ENCODE measurements at regions of chr3 and their contacts with region 1.

Region 1: GRCh38 chr3:126475413-126476114 is at the start of gene ZXDC:
- DNase-seq: peak; percentile 80 to 97 (median 91)
- H3K4me3 ChIP-seq: peak within 1 kb of the TSS; percentile 65 to 94 (median 81)
- H3K27ac ChIP-seq: peak within 1 kb of the TSS; percentile 23 to 95 (median 85)
- H3K27me3 ChIP-seq: no peaks in the 10 kb centered on the region
- CTCF ChIP-seq: peak in 35 of 56 donors; percentile 14 to 56 (median 30)
- total RNA-seq, gene ZXDC: 28.6 to 58.7 (median 41.4) TPM

Region 2: GRCh38 chr3:125916376-125916978 is 559.1 kb before region 1 on chr3:
- intact Hi-C with region 1: loop called (anchors 5 to 10 kb)
- DNase-seq: peak; percentile 92 to 97 (median 96)
- H3K4me3 ChIP-seq: peak overlapping the region; percentile 24 to 93 (median 77)
- H3K27ac ChIP-seq: peak overlapping the region in 52 of 59 donors; percentile 8 to 92 (median 75)
- H3K27me3 ChIP-seq: no peaks in the 10 kb centered on the region
- CTCF ChIP-seq: peak in 39 of 56 donors; percentile 20 to 69 (median 45)

Region 3: GRCh38 chr3:126259411-126260391 is 215.9 kb before region 1 on chr3:
- intact Hi-C with region 1: loop called (anchors 5 kb)
- DNase-seq: peak; percentile 18 to 84 (median 70)
- H3K4me3 ChIP-seq: peak overlapping the region in 5 of 59 donors; percentile 1 to 31 (median 21)
- H3K27ac ChIP-seq: peak overlapping the region in 3 of 59 donors; percentile 0 to 44 (median 15)
- H3K27me3 ChIP-seq: no peaks in the 10 kb centered on the region
- CTCF ChIP-seq: peak; percentile 43 to 96 (median 82)

Region 4: GRCh38 chr3:126357295-126358037 is 118.1 kb before region 1 on chr3 and contains the start of gene KLF15:
- intact Hi-C with region 1: loop called (anchors 2 to 5 kb)
- DNase-seq: peak; percentile 82 to 96 (median 90)
- H3K4me3 ChIP-seq: peak within 1 kb of the TSS; percentile 61 to 95 (median 82)
- H3K27ac ChIP-seq: peak within 1 kb of the TSS; percentile 90 to 100 (median 98)
- H3K27me3 ChIP-seq: no peaks in the 10 kb centered on the region
- CTCF ChIP-seq: peak in 1 of 56 donors; percentile 14
- total RNA-seq, gene KLF15: 11.7 to 112 (median 39.5) TPM

Region 5: DNA sequence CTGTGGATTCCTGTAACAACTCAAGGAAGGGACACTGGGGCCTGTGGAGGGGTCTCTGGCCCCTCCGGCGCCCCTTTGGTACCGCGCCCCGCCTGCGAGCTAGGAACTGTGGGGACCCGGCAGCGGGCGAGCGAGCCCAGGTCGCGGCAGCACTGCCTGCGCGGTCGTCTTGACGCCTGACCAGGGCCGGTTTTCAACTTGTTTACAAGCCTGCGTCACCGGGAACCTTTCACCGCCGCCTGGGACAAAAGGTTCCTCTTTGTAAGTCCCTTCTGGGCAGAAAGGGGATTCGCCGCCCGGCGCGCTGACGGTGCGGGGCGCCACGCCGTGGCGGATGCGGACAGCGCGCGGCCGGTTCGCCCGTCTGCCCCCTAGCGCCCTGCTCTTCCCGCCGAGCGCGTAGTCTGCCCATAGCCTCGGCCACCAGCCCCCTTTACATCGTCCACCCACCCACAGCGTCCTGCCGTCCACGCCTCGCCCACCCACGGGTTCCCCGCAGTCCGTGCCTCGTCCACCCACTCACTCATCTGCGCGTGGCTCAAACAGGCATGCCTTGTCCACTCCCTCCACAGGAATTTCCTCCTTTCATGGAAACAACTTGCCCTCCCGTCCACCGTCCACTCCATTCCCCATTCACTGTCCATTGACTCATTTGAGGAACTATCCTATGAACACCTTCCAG is 86.3 kb before region 1 on chr3:
- intact Hi-C with region 1: loop called (anchors 1 to 10 kb)
- DNase-seq: peak; percentile 76 to 92 (median 90)
- H3K4me3 ChIP-seq: peak overlapping the region; percentile 41 to 85 (median 64)
- H3K27ac ChIP-seq: peak overlapping the region; percentile 63 to 95 (median 88)
- H3K27me3 ChIP-seq: no peaks in the 10 kb centered on the region
- CTCF ChIP-seq: peak; percentile 58 to 100 (median 99)

Region 6: DNA sequence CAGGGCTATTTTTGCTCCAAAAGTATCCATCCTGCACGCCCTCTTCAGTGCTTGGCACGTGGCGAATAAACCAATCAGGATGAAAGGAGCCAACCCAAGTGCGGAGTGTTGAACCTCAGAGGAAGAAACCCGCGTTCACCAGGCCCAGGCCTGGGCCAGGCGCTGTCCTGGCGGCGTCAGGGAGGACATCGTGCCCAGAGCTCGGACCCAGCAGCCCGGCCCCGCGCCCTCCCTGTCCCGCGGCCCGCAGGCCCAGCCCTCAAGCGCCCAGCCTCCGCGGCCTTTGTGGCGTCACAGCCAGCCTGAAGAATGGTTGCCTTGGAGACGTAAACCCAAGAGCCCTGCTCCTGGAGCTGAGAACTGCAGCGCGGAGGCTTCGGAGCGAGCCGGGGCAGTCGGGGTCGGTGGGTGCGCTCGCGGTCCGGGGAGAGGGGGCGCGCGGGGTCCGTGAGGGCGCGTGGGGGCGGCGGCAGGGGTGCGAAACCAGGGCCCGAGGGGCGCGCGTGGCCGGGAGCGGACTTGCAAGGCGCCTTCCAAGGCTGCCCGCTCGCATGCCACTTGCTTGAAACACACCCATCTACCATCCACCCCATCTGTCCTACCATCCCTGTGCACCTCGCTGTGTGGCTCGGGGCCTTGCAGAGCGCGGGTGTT is 80.9 kb before region 1 on chr3 and contains the start of gene CFAP100:
- intact Hi-C with region 1: loop called (anchors 1 to 10 kb)
- DNase-seq: peak in 6 of 10 donors; percentile 11 to 67 (median 56)
- H3K4me3 ChIP-seq: peak within 1 kb of the TSS; percentile 14 to 61 (median 45)
- H3K27ac ChIP-seq: peak within 1 kb of the TSS in 2 of 59 donors; percentile 33 to 53
- H3K27me3 ChIP-seq: no peaks in the 10 kb centered on the region
- CTCF ChIP-seq: no peak
- total RNA-seq, gene CFAP100: 0.29 to 7.9 (median 2.4) TPM in 113 of 120 experiments, not detected in the others

Region 7: DNA sequence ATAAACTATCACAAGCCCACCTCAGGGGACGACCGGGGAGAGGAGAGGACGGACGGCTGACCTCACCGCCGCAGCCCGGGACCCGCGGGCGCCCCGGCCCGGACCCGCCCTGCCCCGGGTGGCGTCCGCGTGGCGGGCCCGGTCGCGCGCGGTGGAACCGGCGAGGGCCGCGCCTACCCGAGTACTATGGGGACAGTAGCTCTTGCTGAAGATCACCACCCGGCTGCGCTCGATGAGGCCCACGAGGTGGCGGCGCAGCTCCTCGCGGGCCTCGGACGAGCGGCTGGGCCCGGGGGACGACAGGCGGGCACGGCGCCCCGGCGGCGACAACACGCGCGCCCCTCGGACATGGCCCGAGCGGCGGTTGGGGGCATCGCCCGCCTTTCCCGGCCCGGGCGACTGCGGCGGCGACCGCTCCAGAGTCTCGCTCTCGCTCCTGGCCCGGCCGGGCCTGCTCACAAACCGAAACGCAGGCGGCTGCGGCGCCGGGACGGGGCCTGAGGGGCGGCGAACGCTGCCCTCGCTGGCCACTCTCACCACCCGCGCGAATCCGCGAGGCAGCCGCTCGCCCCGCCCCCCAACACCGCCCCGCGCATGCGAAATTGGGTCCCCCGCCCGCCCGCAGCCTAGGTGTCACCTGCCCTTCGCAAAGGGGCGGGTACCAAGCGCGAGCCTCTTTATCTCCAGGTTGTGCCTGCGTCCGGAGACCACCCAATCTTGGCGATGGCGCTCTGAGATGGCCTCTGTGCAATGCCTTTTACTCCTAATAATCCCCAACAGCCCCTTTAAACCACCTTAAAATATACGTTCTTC is 179.2 kb after region 1 on chr3 and contains the start of gene TXNRD3:
- intact Hi-C with region 1: no loop called
- DNase-seq: peak in 9 of 10 donors; percentile 57 to 87 (median 74)
- H3K4me3 ChIP-seq: peak within 1 kb of the TSS; percentile 50 to 92 (median 75)
- H3K27ac ChIP-seq: peak within 1 kb of the TSS in 35 of 59 donors; percentile 6 to 87 (median 64)
- H3K27me3 ChIP-seq: no peaks in the 10 kb centered on the region
- CTCF ChIP-seq: peak in 20 of 56 donors; percentile 11 to 52 (median 26)
- total RNA-seq, gene TXNRD3: 4.0 to 17.3 (median 8.9) TPM

Measured in dorsolateral prefrontal cortex (tissue), 120 donors.